A549 (cell line): ENCODE measurements at regions of chr15 and their contacts with region 1.

Region 1: GRCh38 chr15:90902040-90902839 is 862 bp upstream of the MAN2A2 start:
- DNase-seq: peak; percentile 88 to 99
- ATAC-seq: peak; percentile 88 to 94
- H3K4me3 ChIP-seq: peak overlapping the region; percentile 81
- H3K27ac ChIP-seq: peak overlapping the region; percentile 88
- H3K4me1 ChIP-seq: peaks cover 14% of the 10 kb centered on the region
- CTCF ChIP-seq: peak; percentile 90
- EP300 ChIP-seq: no peak
- POLR2A ChIP-seq: peak; percentile 91
- RAD21 ChIP-seq: peak; percentile 25 to 59; a peak in 4 of 5 replicates

Region 2: GRCh38 chr15:90915808-90916440 is 13.7 kb after region 1 on chr15:
- CTCF ChIA-PET with region 1: interaction called, 83 read pairs
- POLR2A ChIA-PET with region 1: no interaction called
- DNase-seq: no peak
- ATAC-seq: no peak
- H3K4me3 ChIP-seq: no peak overlapping the region
- H3K27ac ChIP-seq: no peak overlapping the region
- H3K4me1 ChIP-seq: no peaks in the 10 kb centered on the region
- CTCF ChIP-seq: no peak
- EP300 ChIP-seq: no peak
- POLR2A ChIP-seq: no peak
- RAD21 ChIP-seq: no peak